ENCODE measurements at regions of chr20 and their contacts with region 1.

Region 1: GRCh38 chr20:46520976-46521579 is 7.7 kb upstream of the ZNF334 start:
- DNase-seq: peak in 4 of 5 donors; percentile 33 to 58 (median 48)
- H3K4me3 ChIP-seq: no peak overlapping the region
- H3K27ac ChIP-seq: no peak overlapping the region
- H3K4me1 ChIP-seq: peaks cover 0 to 3% (median 0%) of the 10 kb centered on the region in 3 donors
- H3K27me3 ChIP-seq: no peaks in the 10 kb centered on the region
- CTCF ChIP-seq: peak; percentile 80

Region 2: DNA sequence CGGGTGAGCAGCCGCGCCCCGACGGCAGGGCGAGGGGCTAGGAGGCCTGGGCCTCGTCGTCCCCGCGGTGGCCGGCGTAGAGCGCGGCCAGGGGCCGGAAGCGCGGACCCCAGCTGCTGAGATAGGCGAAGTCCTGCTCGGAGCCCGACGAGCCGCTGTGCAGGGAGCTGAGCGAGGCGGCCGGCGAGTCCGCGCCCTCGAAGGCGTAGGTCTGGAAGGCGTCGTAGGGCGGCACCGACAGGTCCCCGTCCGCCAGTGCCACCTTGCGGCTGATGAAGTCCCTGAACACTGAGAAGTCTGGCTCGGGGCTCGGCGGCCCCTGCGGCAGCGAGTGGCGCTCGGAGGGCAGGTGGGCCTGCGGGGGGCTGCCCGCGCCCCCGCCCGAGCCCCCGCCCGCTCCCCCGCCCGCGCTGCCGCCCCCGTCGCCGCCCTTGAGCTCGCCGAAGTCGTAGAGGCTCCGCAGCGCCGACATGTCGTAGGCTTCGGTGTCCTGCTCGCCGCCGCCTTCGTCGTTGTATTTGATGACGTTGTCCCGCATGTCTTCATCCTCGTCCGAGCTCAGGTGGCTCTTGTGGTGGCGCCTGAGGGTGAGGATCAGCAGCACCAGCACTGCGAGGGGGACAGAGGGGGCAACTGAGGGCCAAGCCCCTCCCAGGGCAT is 346.5 kb before region 1 on chr20:
- intact Hi-C with region 1: no loop called
- DNase-seq: peak in 4 of 5 donors; percentile 75 to 86 (median 78)
- H3K4me3 ChIP-seq: no peak overlapping the region
- H3K27ac ChIP-seq: no peak overlapping the region
- H3K4me1 ChIP-seq: peaks cover 0 to 2% (median 0%) of the 10 kb centered on the region in 3 donors
- H3K27me3 ChIP-seq: peaks cover 14% of the 10 kb centered on the region
- CTCF ChIP-seq: peak; percentile 67

Region 3: DNA sequence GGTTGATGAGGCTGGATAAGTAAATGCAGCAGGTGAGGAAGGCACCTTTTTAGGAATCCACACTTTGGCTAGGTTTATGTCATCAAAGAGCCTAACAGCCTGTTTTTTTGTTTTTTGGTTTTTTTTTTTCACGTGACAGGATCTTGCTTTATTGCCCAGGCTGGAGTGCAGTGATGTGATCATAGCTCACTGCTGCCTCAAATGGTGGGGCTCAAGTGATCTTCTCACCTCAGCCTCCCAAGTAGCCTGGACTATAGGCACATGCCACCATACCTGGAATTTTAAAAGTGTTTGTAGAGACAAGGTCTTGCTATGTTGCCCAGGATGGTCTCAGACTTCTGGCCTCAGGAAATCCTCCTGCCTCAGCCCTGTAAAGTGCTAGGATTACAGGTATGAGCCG is 43.9 kb before region 1 on chr20:
- intact Hi-C with region 1: no loop called
- DNase-seq: no peak
- H3K4me3 ChIP-seq: no peak overlapping the region
- H3K27ac ChIP-seq: no peak overlapping the region
- H3K4me1 ChIP-seq: no peaks in the 10 kb centered on the region
- H3K27me3 ChIP-seq: no peaks in the 10 kb centered on the region
- CTCF ChIP-seq: no peak

Region 4: GRCh38 chr20:46674253-46675083 is 153.4 kb after region 1 on chr20:
- intact Hi-C with region 1: loop called (anchors 5 kb)
- DNase-seq: peak in 1 of 5 donors; percentile 56
- H3K4me3 ChIP-seq: no peak overlapping the region
- H3K27ac ChIP-seq: no peak overlapping the region
- H3K4me1 ChIP-seq: no peaks in the 10 kb centered on the region
- H3K27me3 ChIP-seq: no peaks in the 10 kb centered on the region
- CTCF ChIP-seq: no peak

Measured in kidney (tissue), 22 donors.